Posterior cingulate gyrus (tissue), 11 donors: ENCODE measurements at regions of chr4 and their contacts with region 1.

Region 1: DNA sequence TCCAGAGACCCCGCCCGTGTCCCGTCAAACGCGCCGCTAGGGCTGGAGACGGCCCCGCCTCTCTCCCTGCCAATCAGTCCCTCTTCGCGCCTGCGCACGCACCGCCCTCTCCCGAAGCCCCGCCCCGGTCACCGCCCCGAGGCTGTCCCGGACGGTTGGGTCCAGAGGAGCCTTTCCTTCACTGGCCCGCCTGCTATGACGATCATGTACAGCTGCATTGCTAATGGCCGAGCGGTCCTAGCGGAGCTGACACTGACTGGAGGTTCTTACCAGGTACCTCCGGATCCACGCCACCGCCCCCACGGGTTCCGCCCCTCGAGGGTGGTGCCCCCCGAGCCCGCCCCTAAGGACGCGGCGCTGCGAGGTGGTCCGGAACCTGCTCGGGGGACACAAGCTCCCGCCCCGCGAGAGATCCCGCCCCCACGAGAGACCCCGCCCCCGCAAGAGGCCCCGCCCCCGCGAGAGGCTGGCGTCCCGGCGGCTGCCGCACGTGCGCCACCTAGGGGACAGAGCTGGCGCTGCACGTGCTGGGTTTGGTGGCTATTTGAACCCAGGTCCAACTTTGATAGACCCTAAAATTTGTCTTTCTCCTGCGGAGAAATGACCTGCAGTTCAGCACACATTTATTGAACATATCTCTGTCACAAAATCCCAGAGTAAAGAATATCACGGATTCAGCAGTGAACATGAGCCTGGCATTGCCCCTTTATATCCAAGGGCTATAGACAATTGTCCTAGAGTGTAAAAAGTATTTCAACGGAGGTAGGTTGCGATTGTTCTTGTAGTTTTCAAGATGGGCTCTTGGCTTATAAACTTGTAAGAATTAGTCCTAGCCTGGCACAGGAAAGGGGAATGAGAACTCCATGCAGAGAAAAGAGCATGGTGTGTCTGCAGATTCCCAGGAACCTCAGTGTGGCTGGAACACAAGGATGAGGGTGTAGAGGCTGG is 88.7 kb downstream of the HNRNPD start:
- DNase-seq: peak; percentile 98 to 100 (median 99)

Region 2: GRCh38 chr4:82428969-82429727 is 144.0 kb after region 1 on chr4:
- intact Hi-C with region 1: loop called (anchors 10 kb)
- DNase-seq: peak; percentile 84 to 99 (median 90)